Left ventricle myocardium superior (tissue), 1 donor: ENCODE measurements at regions of chr9 and their contacts with region 1.

Region 1: GRCh38 chr9:128412120-128412790 is 8.4 kb upstream of the CERCAM start:
- DNase-seq: peak; percentile 49
- ATAC-seq: peak; percentile 39

Region 2: GRCh38 chr9:128361986-128362646 is 50.1 kb before region 1 on chr9:
- intact Hi-C with region 1: loop called (anchors 10 kb)
- DNase-seq: peak; percentile 86
- ATAC-seq: peak; percentile 93

Region 3: DNA sequence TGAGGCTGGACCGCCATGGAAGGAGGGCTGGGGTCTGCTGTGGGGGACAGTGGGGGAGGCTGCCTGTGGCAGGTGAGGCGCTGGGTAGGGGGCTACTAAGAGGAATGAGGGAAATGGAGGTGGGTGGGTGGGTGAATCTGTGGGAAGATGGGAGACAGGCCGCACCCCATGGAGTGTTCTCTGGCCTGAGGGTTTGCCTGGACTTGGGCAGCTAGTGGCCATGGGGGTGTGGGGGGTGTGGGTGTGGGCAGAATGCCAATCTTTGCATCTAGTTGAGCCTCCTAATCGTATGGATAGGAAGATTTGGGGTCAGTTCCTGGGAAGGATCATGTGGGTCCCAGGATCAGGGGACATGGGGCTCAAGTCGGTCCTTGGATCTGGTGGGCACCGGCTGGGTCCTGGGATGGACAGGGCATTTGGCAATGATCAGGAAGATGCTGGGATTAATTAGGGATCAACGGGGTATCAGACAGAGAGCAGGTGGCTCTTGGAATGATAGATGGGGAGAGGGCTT is 311.2 kb after region 1 on chr9:
- intact Hi-C with region 1: no loop called
- DNase-seq: no peak
- ATAC-seq: no peak